ENCODE measurements at regions of chr1 and their contacts with region 1.

Region 1: DNA sequence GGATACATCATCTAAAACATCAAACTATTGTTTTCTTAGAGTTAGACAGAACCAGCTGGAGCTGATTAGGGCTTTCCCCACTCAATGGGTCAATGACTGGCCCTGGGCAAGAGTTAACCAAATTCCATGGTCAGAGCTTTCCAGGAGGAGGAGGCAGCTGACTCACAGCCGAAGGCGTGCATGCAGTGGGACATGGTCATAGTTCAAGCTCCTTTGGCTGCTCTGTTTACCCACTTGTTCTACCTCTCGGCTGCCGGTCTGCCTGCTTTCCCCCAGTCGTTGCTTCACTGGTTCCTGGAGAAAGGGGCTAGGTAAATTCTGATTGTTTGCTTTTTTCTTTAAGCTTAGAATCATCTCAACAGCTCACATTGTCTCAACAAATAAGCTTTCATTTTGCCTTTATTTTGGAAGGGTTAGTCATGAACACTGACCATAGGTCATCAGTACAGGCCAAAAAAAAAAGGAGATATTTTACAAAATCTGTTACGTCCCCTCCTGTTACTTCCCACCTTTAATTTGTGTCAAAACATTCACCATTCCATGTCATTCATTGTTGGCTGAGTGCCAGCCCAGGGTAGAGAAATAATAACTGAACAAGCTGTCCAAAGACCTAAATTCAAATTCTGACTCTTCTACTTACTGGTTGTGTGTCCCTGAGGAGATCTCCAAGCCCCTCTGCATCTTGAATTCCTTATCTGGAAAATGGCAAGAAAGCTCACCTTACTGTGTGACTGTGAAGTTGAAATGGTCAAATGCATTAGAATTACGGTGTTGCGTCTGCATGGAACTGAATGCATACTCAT is 12.0 kb downstream of the MAB21L3 start:
- DNase-seq: peak; percentile 92
- ATAC-seq: peak; percentile 88
- H3K4me3 ChIP-seq: peak overlapping the region; percentile 44
- H3K27ac ChIP-seq: peak overlapping the region; percentile 82
- H3K4me1 ChIP-seq: peaks cover 38% of the 10 kb centered on the region
- H3K27me3 ChIP-seq: no peaks in the 10 kb centered on the region
- CTCF ChIP-seq: no peak

Region 2: GRCh38 chr1:116076831-116077230 is 46.3 kb before region 1 on chr1:
- CTCF ChIA-PET with region 1: no interaction called
- POLR2A ChIA-PET with region 1: no interaction called
- intact Hi-C with region 1: loop called (anchors 1 kb)
- DNase-seq: peak; percentile 36
- ATAC-seq: no peak
- H3K4me3 ChIP-seq: no peak overlapping the region
- H3K27ac ChIP-seq: no peak overlapping the region
- H3K4me1 ChIP-seq: peaks cover 12% of the 10 kb centered on the region
- H3K27me3 ChIP-seq: no peaks in the 10 kb centered on the region
- CTCF ChIP-seq: no peak

Measured in PC-3 (cell line).